Natural killer cell (primary cell): ENCODE measurements at regions of chr13 and their contacts with region 1.

Region 1: GRCh38 chr13:71879129-71879535 is 12.1 kb upstream of the DACH1 start:
- DNase-seq: peak in 1 of 2 donors; percentile 40
- ATAC-seq: peak; percentile 53 to 70 (median 60)
- H3K4me3 ChIP-seq: no peak overlapping the region
- H3K4me3 Mint-ChIP-seq: no peak overlapping the region
- H3K27ac ChIP-seq: no peak overlapping the region
- H3K27ac Mint-ChIP-seq: no peak overlapping the region
- H3K4me1 ChIP-seq: no peaks in the 10 kb centered on the region
- H3K4me1 Mint-ChIP-seq: no peaks in the 10 kb centered on the region
- H3K27me3 ChIP-seq: no peaks in the 10 kb centered on the region
- H3K27me3 Mint-ChIP-seq: no peaks in the 10 kb centered on the region
- CTCF ChIP-seq: peak; percentile 32

Region 2: DNA sequence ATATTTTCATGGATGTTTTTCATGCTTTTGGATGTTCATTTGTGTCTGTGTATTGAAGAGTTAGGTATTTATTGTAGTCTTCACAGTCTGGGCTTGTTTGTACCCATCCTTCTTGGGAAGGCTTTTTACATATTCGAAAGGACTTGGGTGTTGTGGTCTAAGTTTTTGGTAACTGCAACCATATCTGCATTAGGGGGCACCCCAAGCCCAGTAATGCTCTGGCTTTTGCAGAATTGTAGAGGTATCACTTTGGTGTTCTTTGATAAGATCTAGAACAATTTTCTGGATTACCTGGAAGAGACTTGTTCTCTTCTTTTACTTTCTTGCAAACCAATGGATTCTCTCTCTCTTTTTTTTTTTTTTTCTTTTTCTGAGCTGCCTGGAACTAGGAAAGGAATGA is 593.4 kb before region 1 on chr13:
- intact Hi-C with region 1: loop called (anchors 5 kb)
- DNase-seq: peak in 1 of 2 donors; percentile 28
- ATAC-seq: peak in 1 of 3 donors; percentile 62
- H3K4me3 ChIP-seq: no peak overlapping the region
- H3K4me3 Mint-ChIP-seq: no peak overlapping the region
- H3K27ac ChIP-seq: no peak overlapping the region
- H3K27ac Mint-ChIP-seq: no peak overlapping the region
- H3K4me1 ChIP-seq: peaks cover 4% of the 10 kb centered on the region
- H3K4me1 Mint-ChIP-seq: peaks cover under 1 to 2% of the 10 kb centered on the region in 2 donors
- H3K27me3 ChIP-seq: no peaks in the 10 kb centered on the region
- H3K27me3 Mint-ChIP-seq: peaks cover 0 to 2% of the 10 kb centered on the region in 2 donors
- CTCF ChIP-seq: peak; percentile 59

Region 3: DNA sequence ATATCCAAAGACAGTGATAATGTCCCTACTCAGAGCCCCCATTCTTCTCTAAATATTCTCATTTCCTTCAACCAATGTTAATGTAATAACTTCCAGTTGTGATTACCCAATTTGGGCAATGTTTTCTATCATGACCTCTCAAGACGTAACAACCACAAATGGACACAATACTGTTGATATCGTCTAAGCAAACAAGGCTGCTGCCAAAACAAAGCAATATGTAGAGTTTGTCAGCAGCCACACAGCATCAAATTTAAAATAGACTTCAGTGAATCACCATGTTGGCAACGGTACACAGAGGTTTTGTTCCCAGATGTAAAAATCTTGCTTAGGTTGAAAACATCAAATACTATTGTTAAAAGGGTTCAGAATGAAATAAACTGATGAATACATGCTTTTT is 217.2 kb before region 1 on chr13:
- intact Hi-C with region 1: no loop called
- DNase-seq: no peak
- ATAC-seq: no peak
- H3K4me3 ChIP-seq: no peak overlapping the region
- H3K4me3 Mint-ChIP-seq: no peak overlapping the region
- H3K27ac ChIP-seq: no peak overlapping the region
- H3K27ac Mint-ChIP-seq: no peak overlapping the region
- H3K4me1 ChIP-seq: no peaks in the 10 kb centered on the region
- H3K4me1 Mint-ChIP-seq: no peaks in the 10 kb centered on the region
- H3K27me3 ChIP-seq: no peaks in the 10 kb centered on the region
- H3K27me3 Mint-ChIP-seq: no peaks in the 10 kb centered on the region
- CTCF ChIP-seq: no peak

Region 4: GRCh38 chr13:71967990-71968389 is 88.9 kb after region 1 on chr13:
- intact Hi-C with region 1: no loop called
- DNase-seq: no peak
- ATAC-seq: no peak
- H3K4me3 ChIP-seq: no peak overlapping the region
- H3K4me3 Mint-ChIP-seq: no peak overlapping the region
- H3K27ac ChIP-seq: no peak overlapping the region
- H3K27ac Mint-ChIP-seq: no peak overlapping the region
- H3K4me1 ChIP-seq: no peaks in the 10 kb centered on the region
- H3K4me1 Mint-ChIP-seq: peaks cover 0 to 6% of the 10 kb centered on the region in 2 donors
- H3K27me3 ChIP-seq: no peaks in the 10 kb centered on the region
- H3K27me3 Mint-ChIP-seq: no peaks in the 10 kb centered on the region
- CTCF ChIP-seq: no peak